ENCODE measurements at regions of chr6 and their contacts with region 1.

Region 1: DNA sequence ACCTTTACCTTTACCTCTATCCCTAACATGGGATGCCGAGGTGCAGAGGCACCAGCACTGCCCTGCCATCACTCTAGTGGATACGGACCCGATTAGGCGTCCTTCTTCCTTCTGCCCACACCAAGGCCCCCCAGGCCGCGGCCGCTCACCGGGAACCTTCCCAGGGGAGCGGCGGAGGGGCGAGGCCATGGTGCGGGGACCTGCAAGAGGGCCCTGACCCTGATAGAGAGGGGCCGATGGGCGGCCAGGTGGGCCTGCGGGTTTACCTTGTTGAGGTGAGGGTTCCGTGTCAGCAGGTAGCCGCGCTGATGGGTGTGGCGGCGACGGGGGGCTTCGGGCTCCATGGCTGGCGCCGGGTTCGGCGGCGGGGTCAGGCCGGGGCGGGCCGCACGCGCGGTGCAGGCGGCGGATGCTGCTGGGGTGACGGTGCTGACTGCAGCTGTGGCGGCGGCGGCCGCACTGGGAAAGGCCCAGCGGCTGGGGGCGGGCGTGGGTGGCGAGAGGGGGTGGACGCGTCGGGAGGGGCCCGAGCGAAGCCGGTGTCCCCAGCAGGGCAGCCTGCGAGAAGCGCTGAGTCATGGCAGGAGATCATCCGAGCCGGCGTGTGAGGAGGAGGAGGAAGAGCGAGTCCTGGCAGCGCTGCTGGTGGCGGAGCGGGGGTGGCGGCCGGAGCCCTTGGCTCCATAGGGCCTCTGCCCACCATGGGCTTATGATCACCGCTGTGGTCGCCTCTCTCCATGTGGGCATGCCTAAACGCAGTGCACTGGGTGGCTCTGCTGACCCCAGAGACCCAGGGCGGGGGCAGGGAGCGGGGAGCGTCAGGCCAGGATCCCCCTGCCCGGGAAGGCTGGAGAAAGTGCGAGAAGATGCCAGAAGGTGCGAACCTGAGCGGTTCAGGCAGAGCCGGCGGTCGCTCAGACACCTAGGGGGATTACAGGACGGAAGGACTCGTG is at the start of gene ME1:
- DNase-seq: peak; percentile 43
- H3K4me3 ChIP-seq: peak within 1 kb of the TSS; percentile 68
- H3K27ac ChIP-seq: peak within 1 kb of the TSS; percentile 63
- H3K27me3 ChIP-seq: no peaks in the 10 kb centered on the region
- CTCF ChIP-seq: no peak
- polyA plus RNA-seq, gene ME1: 29.3 and 31.8 TPM in 2 replicates

Region 2: GRCh38 chr6:83417880-83418663 is 12.8 kb before region 1 on chr6:
- CTCF ChIA-PET with region 1: interaction called, 17 read pairs
- POLR2A ChIA-PET with region 1: no interaction called
- DNase-seq: peak; percentile 39
- H3K4me3 ChIP-seq: no peak overlapping the region
- H3K27ac ChIP-seq: no peak overlapping the region
- H3K27me3 ChIP-seq: no peaks in the 10 kb centered on the region
- CTCF ChIP-seq: peak; percentile 77

Region 3: GRCh38 chr6:83474309-83474708 is 43.4 kb after region 1 on chr6:
- CTCF ChIA-PET with region 1: no interaction called
- POLR2A ChIA-PET with region 1: no interaction called
- DNase-seq: no peak
- H3K4me3 ChIP-seq: no peak overlapping the region
- H3K27ac ChIP-seq: no peak overlapping the region
- H3K27me3 ChIP-seq: no peaks in the 10 kb centered on the region
- CTCF ChIP-seq: no peak